PC-3 (cell line): ENCODE measurements at regions of chr12 and their contacts with region 1.

Region 1: GRCh38 chr12:47773062-47773857 is at the start of gene SLC48A1:
- DNase-seq: peak; percentile 76
- ATAC-seq: peak; percentile 80
- H3K4me3 ChIP-seq: peak within 1 kb of the TSS; percentile 88
- H3K27ac ChIP-seq: no peak within 1 kb of the TSS
- H3K4me1 ChIP-seq: peaks cover 42% of the 10 kb centered on the region
- H3K27me3 ChIP-seq: no peaks in the 10 kb centered on the region
- CTCF ChIP-seq: no peak; the same call in none of the 2 replicates
- total RNA-seq, gene SLC48A1: 21.4 and 22.3 TPM in 2 replicates

Region 2: GRCh38 chr12:47610686-47611252 is 162.5 kb before region 1 on chr12:
- CTCF ChIA-PET with region 1: no interaction called
- POLR2A ChIA-PET with region 1: no interaction called
- intact Hi-C with region 1: no loop called
- DNase-seq: no peak
- ATAC-seq: no peak
- H3K4me3 ChIP-seq: no peak overlapping the region
- H3K27ac ChIP-seq: no peak overlapping the region
- H3K4me1 ChIP-seq: no peaks in the 10 kb centered on the region
- H3K27me3 ChIP-seq: no peaks in the 10 kb centered on the region
- CTCF ChIP-seq: no peak

Region 3: DNA sequence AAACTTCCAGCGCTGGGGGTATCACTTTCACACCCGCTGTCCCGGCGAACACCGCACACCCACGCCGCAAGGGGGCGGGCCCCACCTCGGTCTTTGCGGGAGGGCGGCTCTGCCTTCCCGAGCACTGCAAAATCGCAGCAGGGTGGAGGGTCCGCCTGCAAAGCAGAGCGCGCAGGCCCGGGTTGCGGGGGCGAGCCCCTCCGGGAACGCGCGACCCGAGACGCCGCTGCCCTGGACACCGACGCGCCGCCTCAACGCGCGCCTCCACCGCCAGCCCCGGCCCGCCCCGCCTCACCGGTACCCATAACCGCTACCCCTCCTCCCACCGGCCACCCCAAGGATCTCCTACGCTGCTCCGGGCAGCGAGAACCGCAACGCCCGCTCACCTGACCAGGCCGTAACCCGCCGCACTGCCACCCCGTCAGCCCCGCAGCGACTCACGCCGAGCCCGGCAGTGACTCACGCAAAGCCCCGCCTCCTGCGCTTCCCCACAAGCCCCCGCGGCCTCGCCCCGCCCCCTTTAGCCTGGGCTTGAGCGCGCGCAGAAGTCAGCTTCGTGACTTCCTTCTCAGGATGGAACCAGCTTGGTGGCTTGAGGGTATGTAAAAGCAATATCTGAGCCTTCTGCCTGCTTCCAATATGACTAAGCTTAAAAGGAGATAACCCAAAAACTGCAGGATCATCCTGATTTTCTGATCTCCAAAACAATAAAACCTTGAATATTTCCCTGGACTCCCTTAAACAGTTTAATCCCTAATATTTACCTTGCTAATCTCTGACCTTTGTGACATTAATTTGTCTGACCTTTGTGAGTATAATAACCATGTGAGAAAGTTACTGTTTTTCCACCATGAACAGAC is 67.5 kb before region 1 on chr12 and contains the start of gene RPAP3:
- CTCF ChIA-PET with region 1: no interaction called
- POLR2A ChIA-PET with region 1: no interaction called
- intact Hi-C with region 1: no loop called
- DNase-seq: peak; percentile 95
- ATAC-seq: peak; percentile 95
- H3K4me3 ChIP-seq: peak within 1 kb of the TSS; percentile 74
- H3K27ac ChIP-seq: peak within 1 kb of the TSS; percentile 21
- H3K4me1 ChIP-seq: peaks cover 17% of the 10 kb centered on the region
- H3K27me3 ChIP-seq: no peaks in the 10 kb centered on the region
- CTCF ChIP-seq: peak; percentile 63
- total RNA-seq, gene RPAP3: 20.3 and 22.1 TPM in 2 replicates

Region 4: DNA sequence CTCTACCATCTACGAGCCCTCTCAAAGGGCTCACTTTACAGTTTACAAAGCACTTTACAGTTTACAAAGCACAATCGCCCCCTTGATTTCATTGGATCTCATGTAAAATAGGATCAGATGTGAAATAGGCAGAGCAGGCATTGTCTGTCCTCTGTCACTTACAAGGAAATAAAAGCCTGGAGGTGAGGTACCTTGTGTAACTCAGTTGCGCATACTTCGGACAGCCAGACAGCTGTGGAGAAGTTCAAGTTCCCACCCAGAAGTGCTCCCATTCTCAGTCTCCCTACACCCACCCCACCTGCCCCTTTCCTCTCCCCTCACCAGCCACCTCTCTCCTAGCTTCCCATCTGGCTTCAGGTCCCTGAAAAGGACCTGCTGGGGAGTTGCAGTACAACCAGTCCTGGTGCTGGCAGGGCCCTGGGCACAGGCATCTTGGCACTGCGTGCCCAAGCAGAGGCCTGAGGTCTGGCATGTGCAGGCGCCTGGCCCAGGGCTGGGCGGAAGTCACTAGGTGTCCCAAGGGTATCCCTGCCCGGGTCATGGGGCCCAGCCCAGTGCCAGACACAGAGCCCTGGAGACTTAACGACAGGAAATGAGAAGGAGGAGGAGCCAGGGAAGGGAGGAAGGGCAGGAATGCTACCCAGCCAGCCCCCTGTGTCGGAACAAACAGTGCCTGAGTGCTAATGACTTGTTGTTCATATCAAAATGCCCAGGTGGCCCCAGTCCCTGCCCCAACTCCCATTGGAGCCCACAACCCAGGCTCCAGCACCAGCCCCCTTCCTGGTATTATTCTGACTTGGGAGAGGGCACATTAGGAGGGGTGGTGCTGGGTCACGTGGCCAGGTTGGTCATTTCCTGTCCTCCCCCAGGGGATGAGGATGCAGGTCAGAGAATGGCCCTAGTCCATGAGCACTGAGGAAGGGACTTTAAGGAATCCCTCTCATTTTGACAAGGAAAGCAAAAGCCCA is 19.9 kb before region 1 on chr12:
- CTCF ChIA-PET with region 1: interaction called, 3 read pairs
- POLR2A ChIA-PET with region 1: no interaction called
- intact Hi-C with region 1: loop called (anchors 2 kb)
- DNase-seq: peak; percentile 64
- ATAC-seq: peak; percentile 43
- H3K4me3 ChIP-seq: no peak overlapping the region
- H3K27ac ChIP-seq: peak overlapping the region; percentile 67
- H3K4me1 ChIP-seq: peaks cover 56% of the 10 kb centered on the region
- H3K27me3 ChIP-seq: no peaks in the 10 kb centered on the region
- CTCF ChIP-seq: no peak